Caco-2 (cell line): ENCODE measurements at regions of chr15 and their contacts with region 1.

Region 1: GRCh38 chr15:40382580-40383456 is at the start of gene KNSTRN:
- DNase-seq: peak; percentile 92 to 93
- H3K4me3 ChIP-seq: peak within 1 kb of the TSS; percentile 61
- H3K4me3 Mint-ChIP-seq: peak within 1 kb of the TSS; percentile 97
- H3K27ac Mint-ChIP-seq: peak within 1 kb of the TSS; percentile 83
- H3K4me1 ChIP-seq: peaks cover 5% of the 10 kb centered on the region
- H3K4me1 Mint-ChIP-seq: no peaks in the 10 kb centered on the region
- H3K27me3 ChIP-seq: no peaks in the 10 kb centered on the region
- H3K27me3 Mint-ChIP-seq: no peaks in the 10 kb centered on the region
- CTCF ChIP-seq: no peak
- total RNA-seq, gene KNSTRN: 67.5 and 74.7 TPM in 2 replicates

Region 2: GRCh38 chr15:40405501-40406381 is 22.9 kb after region 1 on chr15 and contains the start of gene IVD:
- CTCF ChIA-PET with region 1: no interaction called
- POLR2A ChIA-PET with region 1: interaction called, 8 read pairs
- intact Hi-C with region 1: loop called (anchors 2 kb)
- DNase-seq: peak; percentile 93 to 95
- H3K4me3 ChIP-seq: peak within 1 kb of the TSS; percentile 65
- H3K4me3 Mint-ChIP-seq: peak within 1 kb of the TSS; percentile 82
- H3K27ac Mint-ChIP-seq: peak within 1 kb of the TSS; percentile 72
- H3K4me1 ChIP-seq: 0 out of 2 replicates have a peak, but pooled peaks cover 10% of the 10 kb centered on the region
- H3K4me1 Mint-ChIP-seq: no peaks in the 10 kb centered on the region
- H3K27me3 ChIP-seq: no peaks in the 10 kb centered on the region
- H3K27me3 Mint-ChIP-seq: no peaks in the 10 kb centered on the region
- CTCF ChIP-seq: no peak
- total RNA-seq, gene IVD: 74.5 and 76.6 TPM in 2 replicates